ENCODE measurements at regions of chr4 and their contacts with region 1.

Region 1: DNA sequence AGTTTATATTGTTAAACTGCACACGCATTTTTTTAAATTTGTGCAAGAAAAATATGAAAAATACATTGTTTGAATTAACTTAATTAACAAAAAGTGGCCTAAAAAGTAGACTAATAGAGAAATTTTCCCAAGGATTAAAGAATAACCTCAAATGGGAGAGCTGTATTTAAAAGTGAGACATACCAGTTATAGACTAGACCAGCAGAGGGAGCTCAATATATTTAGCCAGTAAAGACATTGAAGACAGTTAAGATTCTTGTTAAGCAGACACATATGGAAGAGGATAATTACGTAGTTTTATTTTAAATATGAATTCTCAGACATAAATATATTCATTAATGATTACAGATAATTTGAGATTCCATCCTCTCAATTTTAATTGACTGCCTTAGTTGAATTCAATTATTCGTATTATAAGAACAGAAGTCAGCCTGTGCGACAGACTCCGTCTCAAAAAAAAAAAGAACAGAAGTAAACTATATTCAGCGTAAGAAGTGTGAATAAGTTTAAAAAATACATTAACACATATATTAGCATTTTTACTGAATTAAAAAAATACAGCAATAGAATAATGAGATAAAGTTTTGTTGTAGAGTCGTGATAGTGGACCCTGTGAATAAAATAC is 64.8 kb downstream of the GLRA3 start:
- DNase-seq: no peak
- ATAC-seq: peak; percentile 86
- H3K4me3 ChIP-seq: no peak overlapping the region
- H3K27ac ChIP-seq: no peak overlapping the region
- H3K4me1 ChIP-seq: no peaks in the 10 kb centered on the region
- H3K27me3 ChIP-seq: no peaks in the 10 kb centered on the region
- CTCF ChIP-seq: peak; percentile 35 to 50 (median 43); a peak in 5 of 6 replicates
- EP300 ChIP-seq: no peak
- POLR2A ChIP-seq: no peak
- RAD21 ChIP-seq: peak; percentile 39; the same call in 1 of the 2 replicates

Region 2: DNA sequence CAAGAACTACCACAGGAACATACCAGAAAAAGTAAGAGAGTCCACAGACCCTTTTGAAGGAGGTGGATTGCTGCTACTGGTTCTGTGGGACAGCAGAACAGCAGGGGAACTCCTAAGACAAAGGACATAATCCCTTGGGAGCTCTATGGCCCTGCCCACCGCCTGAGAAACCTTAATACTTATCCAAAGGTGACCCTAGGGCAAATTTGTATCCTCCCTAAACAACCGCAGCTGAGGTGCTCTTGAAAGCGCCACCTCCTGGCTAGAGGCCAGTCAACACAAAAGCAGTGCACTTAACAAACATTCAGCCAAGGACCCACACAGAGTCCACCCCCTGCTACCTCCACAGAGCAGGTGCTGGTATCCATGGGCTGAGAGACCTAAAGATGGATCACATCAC is 290.8 kb after region 1 on chr4:
- CTCF ChIA-PET with region 1: interaction called, 10 read pairs
- POLR2A ChIA-PET with region 1: no interaction called
- RAD21 ChIA-PET with region 1: interaction called, 3 read pairs
- SMC1A ChIA-PET with region 1: no interaction called
- in situ Hi-C with region 1: no loop called
- intact Hi-C with region 1: loop called (anchors 1 kb)
- DNase-seq: no peak
- ATAC-seq: peak; percentile 98
- H3K4me3 ChIP-seq: no peak overlapping the region
- H3K27ac ChIP-seq: no peak overlapping the region
- H3K4me1 ChIP-seq: no peaks in the 10 kb centered on the region
- H3K27me3 ChIP-seq: no peaks in the 10 kb centered on the region
- CTCF ChIP-seq: peak in 2 of 3 experiments; percentile 37 to 60; a peak in 4 of 6 replicates
- EP300 ChIP-seq: no peak
- POLR2A ChIP-seq: no peak
- RAD21 ChIP-seq: peak; percentile 29; the same call in 1 of the 2 replicates

Region 3: GRCh38 chr4:175109933-175110332 is 345.7 kb after region 1 on chr4:
- CTCF ChIA-PET with region 1: interaction called, 8 read pairs
- POLR2A ChIA-PET with region 1: no interaction called
- RAD21 ChIA-PET with region 1: interaction called, 7 read pairs
- SMC1A ChIA-PET with region 1: interaction called, 5 read pairs
- in situ Hi-C with region 1: no loop called
- intact Hi-C with region 1: loop called (anchors 1 kb)
- DNase-seq: peak; percentile 8
- ATAC-seq: peak; percentile 99
- H3K4me3 ChIP-seq: no peak overlapping the region
- H3K27ac ChIP-seq: no peak overlapping the region
- H3K4me1 ChIP-seq: no peaks in the 10 kb centered on the region
- H3K27me3 ChIP-seq: no peaks in the 10 kb centered on the region
- CTCF ChIP-seq: peak; percentile 38 to 81 (median 47)
- EP300 ChIP-seq: no peak
- POLR2A ChIP-seq: no peak
- RAD21 ChIP-seq: peak; percentile 20; the same call in 1 of the 2 replicates

Region 4: GRCh38 chr4:175253184-175253902 is 489.1 kb after region 1 on chr4:
- CTCF ChIA-PET with region 1: interaction called, 13 read pairs
- POLR2A ChIA-PET with region 1: no interaction called
- RAD21 ChIA-PET with region 1: no interaction called
- SMC1A ChIA-PET with region 1: interaction called, 3 read pairs
- in situ Hi-C with region 1: no loop called
- intact Hi-C with region 1: loop called (anchors 2 kb)
- DNase-seq: no peak
- ATAC-seq: peak; percentile 78
- H3K4me3 ChIP-seq: no peak overlapping the region
- H3K27ac ChIP-seq: no peak overlapping the region
- H3K4me1 ChIP-seq: no peaks in the 10 kb centered on the region
- H3K27me3 ChIP-seq: no peaks in the 10 kb centered on the region
- CTCF ChIP-seq: peak; percentile 22 to 35 (median 33); a peak in 3 of 6 replicates
- EP300 ChIP-seq: no peak
- POLR2A ChIP-seq: no peak
- RAD21 ChIP-seq: peak; percentile 34

Region 5: DNA sequence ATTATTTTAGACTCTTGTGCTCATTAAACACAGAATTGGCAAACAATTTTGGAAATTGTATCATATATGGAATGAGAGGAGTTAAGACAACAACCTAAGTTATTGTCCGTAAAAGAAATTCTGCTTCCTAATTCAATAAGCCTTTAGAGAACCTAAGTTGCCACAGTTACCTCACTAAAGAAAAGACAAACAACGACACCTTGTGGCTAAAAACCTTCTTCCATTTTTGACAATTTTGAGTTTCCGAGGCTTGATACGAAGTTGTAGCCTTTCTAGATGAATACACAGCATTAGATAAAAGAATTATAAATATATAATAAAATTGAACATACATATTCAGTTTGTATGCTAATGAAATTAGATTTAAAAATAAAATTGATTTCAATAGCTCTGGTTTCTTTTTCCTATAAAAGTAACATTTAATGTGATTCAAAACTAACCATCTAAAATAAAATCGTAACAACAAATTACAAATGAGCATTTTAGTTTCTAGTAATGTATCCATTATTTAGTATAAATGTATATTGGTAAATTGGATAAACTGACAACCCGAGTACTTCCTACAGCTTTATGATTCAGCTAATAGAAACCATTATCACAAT is 772.7 kb after region 1 on chr4:
- CTCF ChIA-PET with region 1: interaction called, 26 read pairs
- POLR2A ChIA-PET with region 1: no interaction called
- RAD21 ChIA-PET with region 1: interaction called, 4 read pairs
- SMC1A ChIA-PET with region 1: interaction called, 11 read pairs
- in situ Hi-C with region 1: no loop called
- intact Hi-C with region 1: loop called (anchors 2 kb)
- DNase-seq: peak; percentile 7
- ATAC-seq: peak; percentile 72
- H3K4me3 ChIP-seq: no peak overlapping the region
- H3K27ac ChIP-seq: no peak overlapping the region
- H3K4me1 ChIP-seq: no peaks in the 10 kb centered on the region
- H3K27me3 ChIP-seq: no peaks in the 10 kb centered on the region
- CTCF ChIP-seq: peak; percentile 37 to 48 (median 44); a peak in 5 of 6 replicates
- EP300 ChIP-seq: no peak
- POLR2A ChIP-seq: no peak
- RAD21 ChIP-seq: peak; percentile 56

Measured in GM12878 (cell line).